GM12878 (cell line): ENCODE measurements at regions of chr11 and their contacts with region 1.

Region 1: DNA sequence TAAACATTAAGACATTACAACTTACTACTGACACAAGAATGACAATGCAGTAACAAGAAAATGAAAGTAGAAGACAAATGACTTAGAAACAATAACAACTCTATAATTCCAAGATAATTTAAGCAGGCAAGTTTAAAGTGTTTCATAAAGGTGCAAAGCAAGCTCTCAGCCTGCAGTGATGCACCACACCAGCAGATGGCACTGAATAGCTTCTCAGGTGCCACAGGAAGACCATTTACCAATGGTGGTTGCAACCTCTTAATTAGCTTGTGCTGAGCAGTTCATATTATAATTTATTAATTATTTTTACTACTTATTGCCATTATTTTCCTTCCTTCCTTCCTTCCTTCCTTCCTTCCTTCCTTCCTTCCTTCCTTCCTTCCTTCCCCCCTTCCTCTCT is 60.6 kb downstream of the NXPE2 start:
- DNase-seq: no peak
- ATAC-seq: peak; percentile 76
- H3K4me3 ChIP-seq: no peak overlapping the region
- H3K27ac ChIP-seq: no peak overlapping the region
- H3K4me1 ChIP-seq: no peaks in the 10 kb centered on the region
- H3K27me3 ChIP-seq: peaks cover 0 to 1% of the 10 kb centered on the region in 2 experiments; a peak in 2 of 4 replicates
- CTCF ChIP-seq: peak; percentile 68 to 84 (median 82)
- EP300 ChIP-seq: no peak
- POLR2A ChIP-seq: no peak
- RAD21 ChIP-seq: peak; percentile 69

Region 2: GRCh38 chr11:114622858-114623257 is 116.1 kb before region 1 on chr11:
- CTCF ChIA-PET with region 1: no interaction called
- POLR2A ChIA-PET with region 1: no interaction called
- RAD21 ChIA-PET with region 1: no interaction called
- SMC1A ChIA-PET with region 1: no interaction called
- in situ Hi-C with region 1: no loop called
- intact Hi-C with region 1: no loop called
- DNase-seq: no peak
- ATAC-seq: peak; percentile 18
- H3K4me3 ChIP-seq: no peak overlapping the region
- H3K27ac ChIP-seq: no peak overlapping the region
- H3K4me1 ChIP-seq: no peaks in the 10 kb centered on the region
- H3K27me3 ChIP-seq: no peaks in the 10 kb centered on the region
- CTCF ChIP-seq: no peak
- EP300 ChIP-seq: no peak
- POLR2A ChIP-seq: no peak
- RAD21 ChIP-seq: no peak

Region 3: GRCh38 chr11:114953039-114953438 is 214.1 kb after region 1 on chr11:
- CTCF ChIA-PET with region 1: no interaction called
- POLR2A ChIA-PET with region 1: no interaction called
- RAD21 ChIA-PET with region 1: no interaction called
- SMC1A ChIA-PET with region 1: no interaction called
- in situ Hi-C with region 1: no loop called
- intact Hi-C with region 1: loop called (anchors 10 kb)
- DNase-seq: no peak
- ATAC-seq: no peak
- H3K4me3 ChIP-seq: no peak overlapping the region
- H3K27ac ChIP-seq: no peak overlapping the region
- H3K4me1 ChIP-seq: no peaks in the 10 kb centered on the region
- H3K27me3 ChIP-seq: no peaks in the 10 kb centered on the region
- CTCF ChIP-seq: no peak
- EP300 ChIP-seq: no peak
- POLR2A ChIP-seq: no peak
- RAD21 ChIP-seq: no peak